ENCODE measurements at regions of chr5 and their contacts with region 1.

Region 1: GRCh38 chr5:142713121-142713706 is 27.3 kb upstream of the FGF1 start:
- DNase-seq: peak; percentile 89
- ATAC-seq: peak; percentile 100
- H3K4me3 Mint-ChIP-seq: peak overlapping the region; percentile 69
- H3K27ac Mint-ChIP-seq: no peak overlapping the region
- H3K4me1 Mint-ChIP-seq: peaks cover 12% of the 10 kb centered on the region
- H3K27me3 Mint-ChIP-seq: peaks cover 20% of the 10 kb centered on the region

Region 2: DNA sequence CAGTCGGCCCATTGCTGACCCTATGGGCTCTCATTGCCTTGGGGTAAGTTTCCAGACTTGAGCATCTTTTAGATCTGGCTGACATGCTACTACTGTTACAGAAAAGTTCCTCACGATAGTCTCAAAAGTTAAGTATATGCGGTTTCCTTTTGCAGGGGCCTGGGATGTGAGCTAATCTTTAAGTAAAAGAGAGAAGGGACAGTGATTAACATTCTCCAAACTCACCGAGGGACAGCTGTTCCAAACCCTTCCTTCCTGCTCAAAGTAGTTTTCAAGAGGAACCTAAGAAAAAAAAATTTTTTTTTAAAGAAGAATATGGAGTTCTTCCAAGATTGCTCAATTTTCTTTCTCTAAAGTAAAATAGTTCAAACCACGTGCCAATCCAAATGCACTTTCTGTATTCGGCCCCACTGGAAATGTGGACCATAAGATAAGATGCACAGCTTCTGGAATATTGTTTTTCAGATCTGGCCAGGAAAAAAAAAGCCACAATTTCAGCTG is 220.4 kb before region 1 on chr5:
- CTCF ChIA-PET with region 1: no interaction called
- POLR2A ChIA-PET with region 1: no interaction called
- DNase-seq: no peak
- ATAC-seq: no peak
- H3K4me3 Mint-ChIP-seq: no peak overlapping the region
- H3K27ac Mint-ChIP-seq: no peak overlapping the region
- H3K4me1 Mint-ChIP-seq: peaks cover 2% of the 10 kb centered on the region
- H3K27me3 Mint-ChIP-seq: peaks cover 2% of the 10 kb centered on the region

Region 3: DNA sequence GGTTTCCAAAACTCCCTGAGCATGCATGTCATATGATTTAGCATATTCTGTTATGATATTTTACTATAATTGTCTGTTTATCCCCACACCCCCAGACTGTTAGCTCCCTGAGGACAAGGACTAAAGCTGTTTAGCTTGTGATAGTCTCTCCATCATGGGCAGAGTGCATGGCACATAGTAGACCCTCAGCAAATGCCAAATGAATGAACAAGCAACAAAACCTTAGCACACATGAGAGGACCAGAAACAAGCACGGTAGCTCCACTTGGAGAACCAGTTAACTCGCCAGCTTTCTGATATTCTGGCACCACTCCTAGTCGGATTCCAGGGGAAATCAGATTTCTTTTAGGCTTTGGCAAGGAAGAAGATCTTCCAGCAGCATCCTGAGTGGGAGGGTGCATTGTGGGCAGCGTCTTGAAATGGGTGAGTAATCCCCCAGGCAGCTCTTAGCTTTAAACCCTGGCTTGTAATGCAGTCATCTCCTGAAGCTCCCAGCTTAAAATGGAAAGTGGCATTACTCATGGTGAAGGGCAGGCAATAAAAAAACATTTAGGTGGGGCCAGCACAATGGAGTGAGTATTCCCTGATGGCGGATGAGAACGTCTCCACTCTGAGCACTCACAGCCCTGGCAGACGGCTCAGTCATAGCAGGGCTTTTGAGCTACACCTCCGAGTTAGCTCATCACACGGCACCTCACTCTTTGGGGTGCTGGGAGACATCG is 68.4 kb before region 1 on chr5:
- CTCF ChIA-PET with region 1: interaction called, 11 read pairs
- POLR2A ChIA-PET with region 1: no interaction called
- DNase-seq: no peak
- ATAC-seq: no peak
- H3K4me3 Mint-ChIP-seq: no peak overlapping the region
- H3K27ac Mint-ChIP-seq: no peak overlapping the region
- H3K4me1 Mint-ChIP-seq: peaks cover 6% of the 10 kb centered on the region
- H3K27me3 Mint-ChIP-seq: peaks cover 23% of the 10 kb centered on the region

Region 4: DNA sequence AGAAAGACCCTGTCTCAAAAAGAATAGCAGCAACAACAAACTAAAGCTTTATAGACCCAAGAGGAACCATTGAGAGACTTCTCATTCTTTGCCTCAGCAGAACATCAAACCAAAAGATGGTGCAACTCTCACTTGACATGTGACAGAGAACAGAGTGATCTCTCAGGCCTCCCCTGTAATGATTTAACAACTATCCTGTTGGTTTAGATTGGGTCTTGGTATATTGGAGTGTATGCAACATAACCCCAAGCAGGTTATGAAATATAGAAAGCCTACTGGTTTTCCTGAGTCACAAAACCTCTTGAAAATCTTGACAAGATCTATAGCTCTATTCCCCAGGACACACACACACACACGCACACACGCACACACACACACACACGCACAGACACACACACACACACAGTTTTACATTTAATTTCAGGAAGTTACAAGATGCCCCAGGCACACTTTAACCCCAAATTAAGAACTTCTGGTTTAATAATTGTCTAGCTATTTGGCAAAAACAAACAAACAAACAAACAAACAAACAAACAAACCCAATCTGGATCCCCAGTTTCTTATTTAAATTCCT is 20.8 kb before region 1 on chr5:
- CTCF ChIA-PET with region 1: interaction called, 19 read pairs
- POLR2A ChIA-PET with region 1: no interaction called
- DNase-seq: no peak
- ATAC-seq: no peak
- H3K4me3 Mint-ChIP-seq: no peak overlapping the region
- H3K27ac Mint-ChIP-seq: no peak overlapping the region
- H3K4me1 Mint-ChIP-seq: no peaks in the 10 kb centered on the region
- H3K27me3 Mint-ChIP-seq: peaks cover 7% of the 10 kb centered on the region

Region 5: DNA sequence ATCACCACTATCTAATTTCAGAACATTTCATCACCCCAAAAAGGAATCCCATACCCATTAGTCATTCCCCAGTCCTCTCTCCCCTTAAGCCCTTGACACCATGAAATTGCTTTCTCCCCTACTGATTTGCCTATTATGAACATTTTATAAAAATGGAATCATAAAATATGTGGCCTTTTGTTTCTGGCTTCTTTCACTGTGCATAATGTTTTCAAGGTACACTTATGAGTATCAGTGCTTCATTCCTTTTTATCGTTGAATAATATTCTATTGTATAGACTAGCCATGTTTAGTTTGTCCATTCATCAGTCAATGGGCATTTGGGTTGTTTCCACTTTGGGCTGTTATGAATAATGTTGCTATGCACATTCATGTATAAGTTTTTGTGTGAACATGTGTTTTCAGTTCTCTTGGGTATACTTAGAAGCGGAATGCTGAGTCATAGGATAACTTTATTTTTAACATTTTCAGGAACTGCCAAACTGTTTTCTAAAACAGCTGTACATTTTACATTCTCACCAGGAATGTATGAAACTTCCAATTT is 13.0 kb after region 1 on chr5:
- CTCF ChIA-PET with region 1: interaction called, 54 read pairs
- POLR2A ChIA-PET with region 1: no interaction called
- DNase-seq: no peak
- ATAC-seq: no peak
- H3K4me3 Mint-ChIP-seq: no peak overlapping the region
- H3K27ac Mint-ChIP-seq: no peak overlapping the region
- H3K4me1 Mint-ChIP-seq: no peaks in the 10 kb centered on the region
- H3K27me3 Mint-ChIP-seq: peaks cover 2% of the 10 kb centered on the region

Region 6: DNA sequence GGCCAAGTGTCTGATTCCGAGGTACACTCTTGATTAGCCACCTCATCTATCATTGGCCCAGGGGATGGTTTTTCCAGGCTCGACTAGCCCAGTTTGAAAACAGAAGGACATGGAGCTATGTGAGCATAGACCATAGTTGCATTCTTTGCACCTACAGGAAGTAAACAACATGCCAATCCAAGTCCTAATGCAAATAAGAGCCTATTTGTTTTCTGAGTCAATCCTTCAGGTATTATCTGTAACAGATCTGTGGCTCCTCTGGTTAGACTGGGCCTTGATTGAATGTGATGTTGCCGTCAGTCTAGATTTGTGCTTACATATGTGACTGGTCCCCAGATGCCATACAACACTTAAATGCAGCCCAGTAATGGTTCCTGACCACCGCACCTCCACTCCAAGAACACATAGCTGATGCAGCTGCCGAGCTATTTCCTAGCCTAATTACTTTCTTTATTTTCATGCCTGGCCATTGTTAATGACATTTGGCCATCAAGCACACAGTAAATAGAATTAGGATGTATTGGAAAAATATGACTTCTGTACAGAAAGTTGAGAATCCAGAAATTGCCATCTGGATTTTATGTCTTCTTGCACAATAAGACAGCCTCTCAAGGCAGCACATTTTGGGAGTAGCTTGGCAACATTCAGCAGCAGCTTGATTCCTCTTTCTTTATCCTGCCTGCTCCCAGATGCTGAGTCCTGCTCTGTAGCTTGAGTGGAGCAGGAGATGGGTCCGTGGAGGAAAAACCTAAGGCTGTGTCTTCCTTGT is 27.4 kb after region 1 on chr5:
- CTCF ChIA-PET with region 1: interaction called, 11 read pairs
- POLR2A ChIA-PET with region 1: no interaction called
- DNase-seq: no peak
- ATAC-seq: no peak
- H3K4me3 Mint-ChIP-seq: no peak overlapping the region
- H3K27ac Mint-ChIP-seq: no peak overlapping the region
- H3K4me1 Mint-ChIP-seq: no peaks in the 10 kb centered on the region
- H3K27me3 Mint-ChIP-seq: peaks cover 9% of the 10 kb centered on the region

Region 7: GRCh38 chr5:142769741-142770631 is 56.8 kb after region 1 on chr5 and contains the start of gene ARHGAP26:
- CTCF ChIA-PET with region 1: interaction called, 12 read pairs
- POLR2A ChIA-PET with region 1: no interaction called
- DNase-seq: peak; percentile 96
- ATAC-seq: peak; percentile 96
- H3K4me3 Mint-ChIP-seq: peak within 1 kb of the TSS; percentile 96
- H3K27ac Mint-ChIP-seq: peak within 1 kb of the TSS; percentile 82
- H3K4me1 Mint-ChIP-seq: peaks cover 35% of the 10 kb centered on the region
- H3K27me3 Mint-ChIP-seq: peaks cover 3% of the 10 kb centered on the region
- total RNA-seq, gene ARHGAP26: 25.4 to 30.3 TPM

Region 8: GRCh38 chr5:142888469-142889085 is 175.4 kb after region 1 on chr5:
- CTCF ChIA-PET with region 1: interaction called, 468 read pairs
- POLR2A ChIA-PET with region 1: no interaction called
- DNase-seq: peak; percentile 24
- ATAC-seq: no peak
- H3K4me3 Mint-ChIP-seq: no peak overlapping the region
- H3K27ac Mint-ChIP-seq: no peak overlapping the region
- H3K4me1 Mint-ChIP-seq: peaks cover 11% of the 10 kb centered on the region
- H3K27me3 Mint-ChIP-seq: no peaks in the 10 kb centered on the region

Region 9: GRCh38 chr5:143648696-143649095 is 935.5 kb after region 1 on chr5:
- CTCF ChIA-PET with region 1: no interaction called
- POLR2A ChIA-PET with region 1: no interaction called
- DNase-seq: no peak
- ATAC-seq: no peak
- H3K4me3 Mint-ChIP-seq: no peak overlapping the region
- H3K27ac Mint-ChIP-seq: no peak overlapping the region
- H3K4me1 Mint-ChIP-seq: no peaks in the 10 kb centered on the region
- H3K27me3 Mint-ChIP-seq: peaks cover 2% of the 10 kb centered on the region

Measured in activated CD8-positive, alpha-beta T cell treated with anti-CD3 and anti-CD28 coated beads, Interleukin-2, amount 10 ng/mL, durations not matched to agents 7 days and 5 days (primary cell).